Right ventricle myocardium inferior (tissue), 1 donor: ENCODE measurements at regions of chr12 and their contacts with region 1.

Region 1: GRCh38 chr12:45268672-45269411 is 52.9 kb downstream of the ANO6 start:
- DNase-seq: peak; percentile 84
- ATAC-seq: peak; percentile 42

Region 2: GRCh38 chr12:45170456-45171042 is 98.3 kb before region 1 on chr12:
- intact Hi-C with region 1: no loop called
- DNase-seq: peak; percentile 70
- ATAC-seq: peak; percentile 69

Region 3: GRCh38 chr12:45234139-45234846 is 34.5 kb before region 1 on chr12:
- intact Hi-C with region 1: loop called (anchors 2 kb)
- DNase-seq: no peak
- ATAC-seq: peak; percentile 87

Region 4: GRCh38 chr12:45279931-45280830 is 11.3 kb after region 1 on chr12:
- intact Hi-C with region 1: no loop called
- DNase-seq: no peak
- ATAC-seq: no peak

Region 5: DNA sequence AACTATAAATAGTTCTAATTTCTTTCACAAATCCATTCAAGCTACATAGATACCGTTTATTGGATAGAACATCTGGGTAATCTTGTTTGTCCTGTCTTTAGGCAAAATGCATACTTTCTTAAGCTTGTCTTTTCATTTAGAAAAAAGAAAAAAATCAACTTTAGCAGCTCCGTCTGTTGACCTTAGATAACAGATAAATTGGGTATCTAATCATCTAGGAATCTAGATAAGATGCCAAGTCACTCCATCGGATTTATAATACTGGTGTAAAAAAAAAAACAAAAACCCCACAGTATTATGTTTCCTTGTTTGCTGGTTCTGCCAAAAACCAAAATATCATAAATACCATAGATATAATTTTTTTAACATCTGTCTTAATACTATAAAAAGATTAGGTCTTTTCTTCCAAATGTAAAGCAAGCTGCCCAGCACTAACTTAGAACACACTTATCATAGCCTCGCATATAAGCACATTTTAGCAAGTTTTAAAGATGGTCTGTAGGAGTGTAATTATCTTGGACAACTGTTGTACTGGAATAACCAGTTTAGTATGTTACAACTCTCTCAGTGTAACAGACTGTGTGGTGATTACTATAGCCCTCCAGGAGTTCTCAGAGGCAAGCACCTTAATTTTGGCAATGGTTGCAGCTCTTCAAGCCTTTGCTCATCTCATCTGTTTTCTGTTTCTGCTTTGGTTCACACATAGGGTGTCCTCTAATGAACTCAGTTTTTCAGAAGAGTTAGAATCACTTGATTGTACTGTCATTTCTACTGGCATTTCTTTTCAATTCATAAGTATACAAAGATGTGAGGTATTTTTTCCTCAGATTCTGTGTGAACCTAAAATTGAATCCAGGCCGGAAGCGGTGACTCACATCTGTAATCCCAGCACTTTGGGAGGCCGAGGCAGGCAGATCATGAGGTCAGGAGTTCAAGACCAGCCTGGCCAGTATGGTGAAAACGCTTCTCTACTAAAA is 30.2 kb after region 1 on chr12:
- intact Hi-C with region 1: no loop called
- DNase-seq: no peak
- ATAC-seq: peak; percentile 51

Region 6: GRCh38 chr12:45336331-45337064 is 67.7 kb after region 1 on chr12:
- intact Hi-C with region 1: no loop called
- DNase-seq: no peak
- ATAC-seq: no peak

Region 7: DNA sequence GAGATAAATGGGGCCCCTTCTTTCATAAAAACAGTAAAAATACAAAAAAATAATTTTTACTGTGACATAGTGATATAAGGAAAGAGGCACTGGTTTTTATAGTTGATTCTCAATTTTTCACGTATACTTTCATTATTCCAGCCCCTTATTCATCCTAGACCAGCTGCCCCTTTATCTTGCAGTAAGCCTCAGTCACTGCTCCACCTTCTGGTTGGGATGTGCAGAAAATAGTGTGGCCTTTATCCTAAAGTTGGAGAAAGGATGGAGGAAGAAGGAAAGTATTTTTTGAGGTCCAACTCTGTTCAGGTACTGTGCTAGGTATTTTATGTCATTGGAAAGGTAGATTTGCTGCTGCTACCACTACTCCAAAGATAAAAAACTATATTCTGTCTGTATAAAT is 119.7 kb after region 1 on chr12:
- intact Hi-C with region 1: loop called (anchors 5 kb)
- DNase-seq: no peak
- ATAC-seq: no peak